Heart right ventricle (tissue), 16 donors: ENCODE measurements at regions of chr11 and their contacts with region 1.

Region 1: DNA sequence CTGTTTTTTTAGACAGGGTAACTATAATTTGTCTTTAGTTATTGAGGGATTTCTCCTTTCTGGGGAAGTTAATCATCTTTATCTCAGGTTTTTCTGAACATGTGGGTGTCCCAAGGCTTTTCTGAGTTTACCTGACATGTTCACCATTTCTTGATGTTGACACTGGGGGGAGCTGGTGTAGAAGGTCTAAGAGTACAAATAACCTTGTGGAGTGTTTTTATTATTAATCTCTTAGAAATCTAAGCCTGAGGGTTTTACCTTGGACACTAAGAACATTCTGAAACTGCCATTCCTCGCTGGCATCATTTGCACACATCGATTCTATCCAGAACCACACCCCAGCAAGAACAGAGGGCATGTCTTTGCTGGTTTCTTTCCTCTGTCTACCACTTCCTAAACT is 15.6 kb upstream of the C11orf91 start:
- DNase-seq: no peak
- ATAC-seq: peak in 3 of 8 donors; percentile 28 to 49 (median 45)
- H3K4me3 ChIP-seq: no peak overlapping the region
- H3K27ac ChIP-seq: peak overlapping the region; percentile 13 to 99 (median 66)
- H3K4me1 ChIP-seq: peaks cover 8 to 78% (median 65%) of the 10 kb centered on the region in 9 donors
- H3K27me3 ChIP-seq: no peaks in the 10 kb centered on the region
- CTCF ChIP-seq: peak in 7 of 9 donors; percentile 28 to 62 (median 52)

Region 2: DNA sequence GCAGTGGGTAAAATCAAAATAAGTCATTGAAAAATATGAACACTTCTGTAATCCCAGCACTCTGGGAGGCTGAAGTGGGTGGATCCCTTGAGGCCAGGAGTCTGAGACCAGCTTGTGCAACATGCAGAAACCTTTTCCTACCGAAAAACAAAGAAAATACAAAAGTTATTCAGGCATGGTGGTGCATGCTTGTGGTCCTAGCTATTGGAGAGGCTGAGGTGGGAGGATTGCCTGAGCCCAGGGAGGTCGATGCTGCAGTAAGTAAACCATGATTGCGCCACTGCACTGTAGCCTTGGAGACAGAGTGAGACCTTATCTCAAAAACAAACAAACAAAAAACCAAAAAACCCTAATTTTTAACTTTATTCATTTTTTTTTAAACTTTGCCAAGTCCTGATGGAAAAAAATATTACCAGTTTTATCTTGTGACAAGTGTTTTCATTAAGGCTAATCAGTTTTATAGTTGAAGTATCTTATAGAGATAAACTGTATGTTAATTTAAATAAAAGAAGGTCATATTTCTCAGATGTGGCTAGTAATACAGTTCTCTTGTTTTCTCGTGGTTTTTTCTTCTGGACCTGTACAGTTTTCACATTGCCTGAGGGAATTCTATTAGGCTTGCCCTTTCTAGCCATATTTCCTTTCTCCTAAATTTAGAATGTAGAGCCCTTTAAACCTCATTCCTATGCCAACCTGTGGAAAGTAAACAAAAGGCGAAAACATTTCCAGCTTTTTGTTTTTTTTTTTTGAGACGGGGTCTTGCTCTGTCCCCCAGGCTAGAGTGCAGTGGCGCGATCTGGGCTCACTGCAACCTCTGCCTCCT is 449.6 kb before region 1 on chr11:
- intact Hi-C with region 1: loop called in 1 of 10 experiments (anchors 10 kb)
- DNase-seq: peak; percentile 25 to 30
- ATAC-seq: peak; percentile 40 to 84 (median 73)
- H3K4me3 ChIP-seq: no peak overlapping the region
- H3K27ac ChIP-seq: peak overlapping the region in 9 of 10 donors; percentile 6 to 73 (median 36)
- H3K4me1 ChIP-seq: peaks cover 5 to 100% (median 94%) of the 10 kb centered on the region in 9 donors
- H3K27me3 ChIP-seq: no peaks in the 10 kb centered on the region
- CTCF ChIP-seq: no peak

Region 3: DNA sequence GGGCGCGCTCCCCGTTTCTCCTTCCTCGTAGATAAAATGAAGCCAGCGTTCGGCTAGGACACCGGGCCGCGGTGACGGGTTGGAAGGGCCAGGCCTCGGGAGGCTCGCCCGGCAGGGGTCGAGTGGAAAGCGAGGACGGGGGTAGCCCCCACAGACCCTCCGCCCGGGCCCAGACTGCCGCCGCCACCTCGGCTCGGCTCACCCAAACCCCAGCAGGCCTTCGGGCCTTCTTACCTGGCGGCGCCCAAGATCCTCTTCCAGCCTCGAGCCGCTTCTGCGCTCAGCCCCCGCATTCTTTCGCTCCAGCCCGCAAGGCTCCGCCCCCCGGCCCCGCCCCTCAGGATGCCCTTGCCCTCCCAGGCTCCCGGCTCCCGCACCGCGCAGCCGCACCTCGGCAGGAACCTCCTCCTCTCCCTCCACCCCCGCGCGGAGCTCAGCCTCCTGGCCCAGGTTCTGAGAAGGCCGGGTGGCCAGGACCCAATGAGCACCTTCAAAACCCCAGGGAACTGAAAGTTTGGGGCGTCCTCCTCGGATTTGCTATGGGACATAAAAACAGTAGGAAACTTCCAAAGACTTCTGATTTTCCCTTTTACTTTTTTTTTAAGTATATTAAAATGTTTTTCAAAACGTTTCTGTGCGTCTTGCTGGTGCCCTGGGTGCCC is 20.0 kb after region 1 on chr11 and contains the start of gene CD59:
- intact Hi-C with region 1: loop called in 1 of 10 experiments (anchors 2 kb)
- DNase-seq: peak; percentile 98
- ATAC-seq: peak; percentile 96 to 97 (median 96)
- H3K4me3 ChIP-seq: peak within 1 kb of the TSS; percentile 66 to 100 (median 84)
- H3K27ac ChIP-seq: peak within 1 kb of the TSS; percentile 94 to 100 (median 96)
- H3K4me1 ChIP-seq: peaks cover 9 to 52% (median 45%) of the 10 kb centered on the region in 9 donors
- H3K27me3 ChIP-seq: no peaks in the 10 kb centered on the region
- CTCF ChIP-seq: no peak
- total RNA-seq, gene CD59: 676 to 1,261 (median 764) TPM